Activated CD4-positive, alpha-beta T cell treated with anti-CD3 and anti-CD28 coated beads, Interleukin-2, amount 10 ng/mL, durations not matched to agents 24 days and 14 days (primary cell): ENCODE measurements at regions of chr21 and their contacts with region 1.

Region 1: GRCh38 chr21:42454786-42455580 is 41.0 kb downstream of the RSPH1 start:
- DNase-seq: no peak
- H3K4me3 Mint-ChIP-seq: no peak overlapping the region
- H3K27ac Mint-ChIP-seq: no peak overlapping the region
- H3K4me1 Mint-ChIP-seq: peaks cover 43% of the 10 kb centered on the region
- H3K27me3 Mint-ChIP-seq: no peaks in the 10 kb centered on the region

Region 2: DNA sequence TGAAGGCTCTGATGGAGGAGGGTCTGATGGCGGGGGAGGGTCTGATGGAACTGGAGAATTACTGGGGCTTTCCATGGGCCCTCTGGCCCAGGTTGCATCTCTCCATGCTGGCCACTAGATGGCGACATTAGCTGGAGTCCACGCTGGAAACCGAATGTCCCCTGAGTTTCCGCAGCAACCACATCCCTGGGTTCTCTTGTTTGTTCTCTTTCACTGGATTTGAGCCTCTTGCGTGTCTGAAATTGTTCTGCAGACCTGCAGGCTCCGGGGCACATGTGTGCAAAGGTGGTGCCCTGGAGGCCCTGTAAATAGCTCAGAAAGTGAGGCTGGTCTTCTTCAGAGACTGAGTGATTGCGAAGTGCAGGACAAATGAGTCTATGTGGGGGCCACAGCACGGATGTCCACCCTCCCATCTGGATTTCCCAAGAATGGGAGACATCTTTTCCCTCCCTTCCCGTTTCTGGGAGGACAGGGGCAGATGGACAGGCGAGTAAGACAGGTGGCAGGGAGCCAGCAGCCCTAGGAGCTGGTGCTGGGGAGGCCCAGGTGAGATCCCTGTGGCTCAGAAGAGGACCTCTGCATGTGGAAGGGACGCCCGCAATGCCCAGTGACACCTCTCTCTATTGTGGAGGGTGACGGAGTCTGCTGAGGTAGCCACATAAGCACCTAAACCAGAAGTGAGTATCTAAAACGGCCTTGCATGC is 309.3 kb before region 1 on chr21:
- intact Hi-C with region 1: loop called (anchors 2 kb)
- DNase-seq: peak; percentile 91
- H3K4me3 Mint-ChIP-seq: no peak overlapping the region
- H3K27ac Mint-ChIP-seq: peak overlapping the region; percentile 22
- H3K4me1 Mint-ChIP-seq: peaks cover 6% of the 10 kb centered on the region
- H3K27me3 Mint-ChIP-seq: peaks cover 8% of the 10 kb centered on the region

Region 3: GRCh38 chr21:42309753-42310221 is 145.2 kb before region 1 on chr21:
- intact Hi-C with region 1: loop called (anchors 1 kb)
- DNase-seq: peak; percentile 93
- H3K4me3 Mint-ChIP-seq: no peak overlapping the region
- H3K27ac Mint-ChIP-seq: no peak overlapping the region
- H3K4me1 Mint-ChIP-seq: peaks cover 4% of the 10 kb centered on the region
- H3K27me3 Mint-ChIP-seq: peaks cover 10% of the 10 kb centered on the region

Region 4: DNA sequence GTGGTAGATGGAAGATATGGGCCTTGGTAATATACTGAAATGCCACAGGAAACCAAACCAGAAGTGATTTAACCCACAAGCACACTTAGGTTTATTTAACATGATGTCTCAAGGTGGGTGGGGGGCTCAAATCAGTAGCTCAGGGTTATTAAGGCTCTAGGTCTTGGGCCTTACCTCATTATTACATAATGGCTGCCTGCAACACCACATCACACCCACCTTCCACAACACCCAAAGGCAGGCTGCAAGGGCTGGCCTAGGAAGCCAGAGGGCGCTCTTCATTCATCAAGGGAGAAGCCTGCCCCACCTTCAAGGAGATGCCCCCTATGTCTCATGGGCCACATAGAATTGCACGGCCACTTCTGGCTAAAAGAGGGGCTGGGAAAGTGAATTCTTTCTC is 94.7 kb before region 1 on chr21:
- intact Hi-C with region 1: loop called (anchors 1 kb)
- DNase-seq: no peak
- H3K4me3 Mint-ChIP-seq: no peak overlapping the region
- H3K27ac Mint-ChIP-seq: no peak overlapping the region
- H3K4me1 Mint-ChIP-seq: no peaks in the 10 kb centered on the region
- H3K27me3 Mint-ChIP-seq: peaks cover 13% of the 10 kb centered on the region

Region 5: GRCh38 chr21:42381334-42381984 is 73.5 kb before region 1 on chr21:
- intact Hi-C with region 1: no loop called
- DNase-seq: peak; percentile 75
- H3K4me3 Mint-ChIP-seq: no peak overlapping the region
- H3K27ac Mint-ChIP-seq: no peak overlapping the region
- H3K4me1 Mint-ChIP-seq: peaks cover 13% of the 10 kb centered on the region
- H3K27me3 Mint-ChIP-seq: no peaks in the 10 kb centered on the region

Region 6: GRCh38 chr21:42574234-42575027 is 119.4 kb after region 1 on chr21:
- intact Hi-C with region 1: no loop called
- DNase-seq: no peak
- H3K4me3 Mint-ChIP-seq: no peak overlapping the region
- H3K27ac Mint-ChIP-seq: no peak overlapping the region
- H3K4me1 Mint-ChIP-seq: no peaks in the 10 kb centered on the region
- H3K27me3 Mint-ChIP-seq: no peaks in the 10 kb centered on the region

Region 7: DNA sequence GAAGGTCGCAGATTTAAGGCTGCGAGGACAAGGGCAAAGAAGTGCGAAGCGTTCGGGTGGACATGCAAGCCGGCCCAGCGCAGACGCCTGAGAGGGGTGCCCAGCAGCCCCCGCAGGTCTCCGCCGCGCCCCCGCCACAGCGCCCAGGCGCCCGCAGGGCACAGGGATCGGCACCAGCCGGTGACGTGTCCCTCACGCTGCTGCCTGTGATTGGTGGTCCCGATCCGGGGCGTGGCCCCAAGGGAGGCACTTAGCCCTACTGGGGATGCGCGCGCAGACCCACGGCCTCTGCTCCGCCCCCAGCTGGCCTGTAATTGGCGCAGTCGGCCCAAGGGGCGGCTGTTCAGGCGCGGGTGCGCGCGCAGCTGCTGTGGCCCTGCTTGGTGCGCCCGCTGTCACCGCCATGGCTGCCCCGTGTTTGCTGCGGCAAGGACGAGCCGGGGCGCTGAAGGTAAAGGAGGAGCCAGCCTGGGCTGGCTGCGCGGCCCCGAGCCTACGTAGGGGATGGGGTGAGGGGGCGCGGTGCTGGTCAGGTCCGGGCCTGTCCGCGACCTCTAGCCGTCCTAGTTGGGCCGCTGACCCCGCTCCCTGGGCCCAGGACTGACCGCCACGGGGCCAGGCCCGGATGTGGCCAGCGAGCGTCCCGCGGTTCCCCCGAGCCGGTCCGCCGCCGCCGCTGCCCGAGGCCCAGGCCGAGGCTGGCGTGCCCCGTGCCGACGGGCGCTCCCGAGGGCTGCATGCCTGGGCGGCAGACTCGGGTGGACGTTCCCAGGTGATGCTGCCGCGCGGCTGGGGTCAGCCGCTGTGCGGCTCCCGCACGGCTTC is 438.2 kb after region 1 on chr21 and contains the start of gene NDUFV3:
- intact Hi-C with region 1: loop called (anchors 2 kb)
- DNase-seq: peak; percentile 99
- H3K4me3 Mint-ChIP-seq: peak within 1 kb of the TSS; percentile 96
- H3K27ac Mint-ChIP-seq: peak within 1 kb of the TSS; percentile 98
- H3K4me1 Mint-ChIP-seq: peaks cover 8% of the 10 kb centered on the region
- H3K27me3 Mint-ChIP-seq: no peaks in the 10 kb centered on the region
- total RNA-seq, gene NDUFV3: 41.2 and 41.7 TPM in 2 replicates